ENCODE measurements at regions of chr7 and their contacts with region 1.

Region 1: GRCh38 chr7:30348083-30348560 is 63.7 kb downstream of the ZNRF2 start:
- DNase-seq: peak; percentile 59
- ATAC-seq: peak; percentile 91
- H3K4me3 Mint-ChIP-seq: peak overlapping the region; percentile 69
- H3K27ac Mint-ChIP-seq: peak overlapping the region; percentile 88
- H3K4me1 Mint-ChIP-seq: peaks cover 54% of the 10 kb centered on the region
- H3K27me3 Mint-ChIP-seq: no peaks in the 10 kb centered on the region

Region 2: DNA sequence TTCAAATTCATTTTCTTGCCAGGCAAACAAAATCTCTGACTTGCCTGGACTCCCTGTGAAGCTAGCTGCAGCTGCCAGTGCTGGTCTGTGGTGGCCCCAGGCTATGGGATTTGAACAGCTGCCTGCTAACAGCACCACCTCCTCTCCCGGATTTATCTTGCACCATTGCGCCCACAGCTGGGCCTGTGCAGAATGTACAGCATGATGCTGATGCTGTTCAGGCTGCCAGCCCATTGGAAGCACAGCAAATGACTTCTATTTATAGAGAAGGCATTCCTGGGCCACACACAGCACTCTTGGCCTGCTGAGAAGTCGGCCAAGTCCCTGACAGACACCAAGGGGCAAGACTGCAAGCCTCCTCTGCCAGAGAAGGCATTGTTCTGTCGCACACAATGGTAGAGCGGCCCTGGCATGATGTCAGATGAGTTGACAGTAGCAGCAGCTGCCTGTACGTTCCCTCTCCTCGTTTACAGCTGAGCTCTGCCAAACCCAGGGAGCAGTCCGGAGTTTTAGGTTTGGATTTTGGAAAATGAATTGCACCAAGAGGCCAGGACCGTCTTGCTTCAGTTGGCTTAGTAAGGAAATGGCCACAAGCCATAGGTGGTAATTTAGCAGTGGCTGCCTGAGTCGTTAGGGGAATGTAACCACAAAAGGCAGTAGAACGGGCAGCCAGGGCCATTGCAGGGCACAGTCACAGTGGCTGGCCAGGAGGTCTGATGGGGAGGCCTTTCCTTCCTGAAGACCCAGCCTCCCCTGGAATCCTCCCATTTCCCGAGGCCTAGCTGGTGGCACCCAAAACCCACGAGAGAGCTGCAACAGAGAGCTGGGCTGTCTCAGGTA is 174.8 kb before region 1 on chr7:
- CTCF ChIA-PET with region 1: no interaction called
- POLR2A ChIA-PET with region 1: no interaction called
- intact Hi-C with region 1: no loop called
- DNase-seq: no peak
- ATAC-seq: no peak
- H3K4me3 Mint-ChIP-seq: no peak overlapping the region
- H3K27ac Mint-ChIP-seq: no peak overlapping the region
- H3K4me1 Mint-ChIP-seq: no peaks in the 10 kb centered on the region
- H3K27me3 Mint-ChIP-seq: no peaks in the 10 kb centered on the region

Region 3: GRCh38 chr7:30322271-30323005 is 25.7 kb before region 1 on chr7:
- CTCF ChIA-PET with region 1: interaction called, 5 read pairs
- POLR2A ChIA-PET with region 1: no interaction called
- intact Hi-C with region 1: loop called (anchors 1 kb)
- DNase-seq: peak; percentile 16
- ATAC-seq: peak; percentile 68
- H3K4me3 Mint-ChIP-seq: peak overlapping the region; percentile 73
- H3K27ac Mint-ChIP-seq: peak overlapping the region; percentile 91
- H3K4me1 Mint-ChIP-seq: peaks cover 63% of the 10 kb centered on the region
- H3K27me3 Mint-ChIP-seq: no peaks in the 10 kb centered on the region

Region 4: GRCh38 chr7:30330134-30331111 is 17.7 kb before region 1 on chr7:
- CTCF ChIA-PET with region 1: interaction called, 5 read pairs
- POLR2A ChIA-PET with region 1: interaction called, 3 read pairs
- intact Hi-C with region 1: loop called (anchors 1 to 2 kb)
- DNase-seq: peak; percentile 39
- ATAC-seq: peak; percentile 87
- H3K4me3 Mint-ChIP-seq: peak overlapping the region; percentile 42
- H3K27ac Mint-ChIP-seq: peak overlapping the region; percentile 77
- H3K4me1 Mint-ChIP-seq: peaks cover 51% of the 10 kb centered on the region
- H3K27me3 Mint-ChIP-seq: no peaks in the 10 kb centered on the region

Region 5: GRCh38 chr7:30493228-30493627 is 145.1 kb after region 1 on chr7:
- CTCF ChIA-PET with region 1: no interaction called
- POLR2A ChIA-PET with region 1: no interaction called
- intact Hi-C with region 1: no loop called
- DNase-seq: no peak
- ATAC-seq: no peak
- H3K4me3 Mint-ChIP-seq: no peak overlapping the region
- H3K27ac Mint-ChIP-seq: no peak overlapping the region
- H3K4me1 Mint-ChIP-seq: no peaks in the 10 kb centered on the region
- H3K27me3 Mint-ChIP-seq: peaks cover 2% of the 10 kb centered on the region

Measured in activated CD4-positive, alpha-beta T cell treated with anti-CD3 and anti-CD28 coated beads for 36 hours (primary cell).